Heart right ventricle (tissue), 16 donors: ENCODE measurements at regions of chr11 and their contacts with region 1.

Region 1: GRCh38 chr11:46554205-46555055 is 39.4 kb downstream of the AMBRA1 start:
- DNase-seq: no peak
- ATAC-seq: peak in 7 of 8 donors; percentile 49 to 87 (median 79)
- H3K4me3 ChIP-seq: no peak overlapping the region
- H3K27ac ChIP-seq: peak overlapping the region in 9 of 10 donors; percentile 19 to 71 (median 57)
- H3K4me1 ChIP-seq: peaks cover 6 to 53% (median 38%) of the 10 kb centered on the region in 9 donors
- H3K27me3 ChIP-seq: no peaks in the 10 kb centered on the region
- CTCF ChIP-seq: no peak

Region 2: GRCh38 chr11:46504817-46505613 is 49.4 kb before region 1 on chr11:
- intact Hi-C with region 1: no loop called
- DNase-seq: no peak
- ATAC-seq: no peak
- H3K4me3 ChIP-seq: no peak overlapping the region
- H3K27ac ChIP-seq: peak overlapping the region in 9 of 10 donors; percentile 30 to 68 (median 51)
- H3K4me1 ChIP-seq: peaks cover 0 to 27% (median 9%) of the 10 kb centered on the region in 9 donors
- H3K27me3 ChIP-seq: no peaks in the 10 kb centered on the region
- CTCF ChIP-seq: no peak

Region 3: GRCh38 chr11:46593550-46594373 is 39.3 kb after region 1 on chr11 and contains the start of gene AMBRA1:
- intact Hi-C with region 1: loop called in 1 of 10 experiments (anchors 5 kb)
- DNase-seq: peak; percentile 81 to 91
- ATAC-seq: peak; percentile 86 to 96 (median 92)
- H3K4me3 ChIP-seq: peak within 1 kb of the TSS; percentile 40 to 97 (median 91)
- H3K27ac ChIP-seq: peak within 1 kb of the TSS; percentile 65 to 94 (median 86)
- H3K4me1 ChIP-seq: peaks cover 6 to 52% (median 47%) of the 10 kb centered on the region in 9 donors
- H3K27me3 ChIP-seq: no peaks in the 10 kb centered on the region
- CTCF ChIP-seq: no peak
- total RNA-seq, gene AMBRA1: 11.7 to 23.3 (median 17.1) TPM